Posterior cingulate gyrus (tissue), 11 donors: ENCODE measurements at regions of chr7 and their contacts with region 1.

Region 1: DNA sequence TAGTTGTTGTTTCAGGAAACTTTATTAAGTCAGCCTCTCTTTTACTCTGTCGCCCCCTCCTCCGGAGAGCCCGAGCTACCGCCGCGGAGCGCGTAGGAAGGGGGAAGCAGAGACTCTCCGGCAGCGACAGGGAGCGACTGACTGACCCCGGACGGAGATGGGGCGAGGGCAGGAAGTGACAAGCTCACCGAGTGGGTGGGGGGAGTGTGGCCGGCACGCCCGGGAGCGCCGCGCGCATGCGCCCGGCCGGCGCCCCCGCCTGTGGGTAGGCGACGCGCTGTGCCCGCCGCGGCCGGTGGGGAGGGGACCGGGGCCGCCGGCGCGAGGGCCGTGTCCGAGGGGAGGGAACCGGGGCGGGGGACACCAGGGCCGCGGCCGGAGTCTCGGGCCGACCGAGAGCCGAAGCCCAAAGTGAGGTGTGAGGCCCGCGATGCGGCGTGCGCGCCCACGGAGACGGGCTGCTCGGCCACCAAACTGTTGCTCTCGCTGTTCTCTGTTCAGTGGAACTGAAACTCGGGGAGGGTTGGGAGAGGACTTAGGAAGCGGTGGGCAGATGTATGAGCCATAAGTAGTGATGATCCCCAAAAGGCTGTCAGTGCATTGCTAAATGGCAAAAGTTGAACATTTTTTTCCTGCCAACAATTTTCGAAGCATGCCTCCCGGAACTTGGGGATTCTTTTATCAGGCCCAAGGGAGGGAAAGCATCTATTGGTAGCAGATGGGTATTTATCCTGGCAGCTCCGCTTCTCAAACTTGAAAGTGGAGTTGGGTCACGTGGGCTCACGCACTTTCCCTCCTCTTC is at the start of gene ZNF800:
- DNase-seq: peak; percentile 87 to 99 (median 90)

Region 2: DNA sequence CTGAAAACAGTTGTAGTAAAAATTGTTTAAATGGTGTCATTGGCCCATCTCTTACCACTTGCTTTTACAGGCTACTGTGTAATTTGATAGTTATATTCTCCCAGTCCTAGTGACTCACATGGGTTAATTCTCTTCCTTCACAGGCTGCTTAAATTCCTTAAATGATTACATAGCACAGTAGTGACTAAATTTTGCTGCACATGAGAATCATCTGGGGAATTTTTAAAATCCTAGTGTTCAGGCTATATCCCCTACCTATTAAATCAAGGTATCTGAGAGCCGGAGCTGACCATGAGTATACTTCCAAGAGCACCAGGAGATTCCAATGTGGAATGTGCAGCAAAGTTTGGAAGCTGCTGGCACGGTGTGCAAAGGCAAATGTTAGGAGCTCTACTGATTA is 45.1 kb after region 1 on chr7:
- intact Hi-C with region 1: no loop called
- DNase-seq: no peak

Region 3: GRCh38 chr7:127585044-127585953 is 192.5 kb after region 1 on chr7 and contains the start of gene GCC1:
- intact Hi-C with region 1: loop called (anchors 5 kb)
- DNase-seq: peak; percentile 90 to 99 (median 94)

Region 4: GRCh38 chr7:127651556-127652332 is 259.0 kb after region 1 on chr7 and contains the start of gene SND1:
- intact Hi-C with region 1: loop called (anchors 2 kb)
- DNase-seq: peak; percentile 98 to 100 (median 99)